SK-N-SH (cell line): ENCODE measurements at regions of chr19 and their contacts with region 1.

Region 1: DNA sequence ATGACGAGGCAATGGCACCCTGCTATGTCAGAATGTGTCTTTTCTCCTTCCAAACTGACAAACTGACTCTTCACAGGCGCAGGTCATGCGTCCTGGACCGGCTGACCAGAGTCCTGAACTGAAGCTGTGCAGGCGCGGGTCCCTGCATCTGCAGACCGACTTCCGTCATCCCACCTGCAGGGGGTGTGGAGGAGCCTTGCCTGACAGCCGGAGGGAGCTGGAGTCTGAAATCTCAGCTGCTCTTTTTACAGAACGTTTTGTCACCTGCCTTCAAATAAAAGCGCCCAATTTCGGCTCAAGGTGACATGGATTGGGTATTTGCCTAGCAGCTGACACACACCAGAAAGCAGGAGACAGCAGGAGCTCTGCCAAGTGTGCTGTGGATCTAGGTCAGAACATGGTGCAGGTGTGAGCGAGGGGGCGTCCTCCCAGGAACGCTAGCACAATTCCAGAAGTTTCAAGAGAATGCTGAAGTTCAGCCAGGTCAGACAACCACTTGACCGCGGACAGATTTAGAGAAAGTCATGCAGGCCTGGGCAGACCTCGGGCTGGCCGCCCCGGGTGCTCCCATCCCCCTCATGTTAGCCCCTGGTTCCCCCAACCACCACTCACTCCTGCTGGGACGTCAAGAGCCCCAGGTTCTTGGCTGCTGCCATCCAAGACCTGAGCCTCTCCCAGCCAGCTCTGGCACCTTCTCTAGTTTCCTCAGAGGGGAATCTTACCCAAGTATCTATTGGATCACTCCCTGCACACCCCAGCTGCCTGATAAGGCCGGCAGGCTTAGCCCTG is 32.8 kb downstream of the ELL start:
- DNase-seq: peak; percentile 78
- H3K4me3 ChIP-seq: no peak overlapping the region
- H3K27ac ChIP-seq: no peak overlapping the region
- H3K4me1 ChIP-seq: peaks cover 14 to 51% of the 10 kb centered on the region in 2 experiments; a peak in 2 of 4 replicates
- H3K27me3 ChIP-seq: no peaks in the 10 kb centered on the region
- CTCF ChIP-seq: peak; percentile 26
- EP300 ChIP-seq: no peak
- RAD21 ChIP-seq: peak; percentile 65

Region 2: DNA sequence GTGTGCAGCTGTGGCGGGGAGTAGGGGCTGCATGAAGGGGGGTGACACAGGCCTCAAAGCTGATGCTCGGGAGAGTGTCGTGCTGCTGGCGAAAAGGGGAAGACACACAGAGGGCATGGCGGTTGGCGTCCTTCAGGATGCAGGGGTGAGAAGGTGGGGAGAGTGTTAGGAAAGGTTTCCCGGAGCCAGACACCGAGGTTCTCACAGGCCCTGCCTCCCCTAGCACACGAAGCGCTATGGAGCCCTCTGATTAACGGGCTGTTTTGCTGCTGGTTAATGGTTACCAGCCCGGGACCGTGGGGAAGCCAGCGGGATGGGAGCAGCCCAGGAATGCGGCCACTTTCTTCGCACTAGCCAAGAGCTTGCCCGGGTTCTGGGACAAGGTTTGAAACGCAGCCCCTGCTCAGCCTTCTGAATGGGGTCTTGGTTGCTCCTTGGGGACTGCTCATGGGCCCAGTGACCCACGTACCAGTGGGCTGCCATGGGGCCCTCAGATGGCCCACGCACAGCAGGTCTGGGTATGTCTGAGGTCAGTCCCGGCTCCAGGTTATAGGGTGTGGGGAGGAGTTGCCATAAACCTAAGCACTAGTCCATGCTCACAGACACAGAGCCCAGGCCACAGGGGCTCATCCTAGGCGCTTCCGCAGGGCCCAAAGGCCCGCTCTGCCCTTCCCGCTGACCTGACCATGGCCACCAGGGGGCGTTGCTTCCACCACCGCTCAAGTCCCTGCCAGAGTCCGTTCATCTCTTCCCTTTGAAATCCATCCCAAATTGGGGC is 19.8 kb before region 1 on chr19:
- CTCF ChIA-PET with region 1: interaction called, 21 read pairs
- POLR2A ChIA-PET with region 1: no interaction called
- DNase-seq: peak; percentile 82
- H3K4me3 ChIP-seq: no peak overlapping the region; a peak in 1 of 4 replicates
- H3K27ac ChIP-seq: no peak overlapping the region
- H3K4me1 ChIP-seq: peaks cover 0 to 5% of the 10 kb centered on the region in 2 experiments; a peak in 1 of 4 replicates
- H3K27me3 ChIP-seq: no peaks in the 10 kb centered on the region
- CTCF ChIP-seq: peak; percentile 84
- EP300 ChIP-seq: no peak
- RAD21 ChIP-seq: peak; percentile 59

Region 3: GRCh38 chr19:18503971-18504885 is 15.2 kb after region 1 on chr19:
- CTCF ChIA-PET with region 1: interaction called, 20 read pairs
- POLR2A ChIA-PET with region 1: interaction called, 3 read pairs
- DNase-seq: no peak
- H3K4me3 ChIP-seq: no peak overlapping the region
- H3K27ac ChIP-seq: no peak overlapping the region; a peak in 1 of 4 replicates
- H3K4me1 ChIP-seq: peaks cover 0 to 75% of the 10 kb centered on the region in 2 experiments; a peak in 1 of 4 replicates
- H3K27me3 ChIP-seq: no peaks in the 10 kb centered on the region
- CTCF ChIP-seq: no peak
- EP300 ChIP-seq: no peak
- RAD21 ChIP-seq: no peak

Region 4: DNA sequence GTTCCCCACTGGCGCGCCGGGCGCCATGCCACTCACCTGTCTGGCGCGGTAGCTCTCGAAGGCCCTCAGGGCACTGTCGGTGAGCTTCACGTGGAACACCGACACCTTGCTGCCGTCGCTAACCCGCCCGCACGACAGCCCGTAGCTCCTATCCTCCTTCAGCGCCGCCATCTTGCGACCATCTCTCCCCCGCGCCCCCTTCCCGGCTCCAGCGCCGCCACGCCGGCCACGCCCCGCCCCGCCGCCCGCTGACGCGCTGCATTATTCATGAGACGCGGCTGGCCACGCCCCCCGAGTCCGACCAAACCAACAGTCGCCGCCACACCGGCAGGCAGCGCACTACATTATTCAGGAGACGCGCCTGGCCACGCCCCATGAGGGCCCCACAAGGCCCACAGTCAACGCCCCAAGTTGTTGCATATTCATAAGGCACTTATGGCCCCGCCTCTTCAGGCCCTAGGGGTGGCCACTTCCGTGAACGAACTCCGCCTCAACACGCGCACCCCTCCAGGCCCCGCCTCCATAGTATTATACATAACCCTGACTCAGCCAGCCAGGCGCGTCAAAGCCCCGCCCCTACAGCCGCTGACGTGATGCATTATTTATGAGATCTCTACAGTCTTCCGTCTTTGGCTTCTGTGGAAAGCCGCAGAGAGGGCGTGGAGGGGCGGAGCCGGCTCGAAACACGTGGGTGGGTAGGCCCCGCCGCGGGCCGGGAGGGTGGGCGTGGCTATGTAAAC is 33.0 kb after region 1 on chr19 and contains the start of gene ELL:
- CTCF ChIA-PET with region 1: interaction called, 29 read pairs
- POLR2A ChIA-PET with region 1: no interaction called
- DNase-seq: peak; percentile 96
- H3K4me3 ChIP-seq: peak within 1 kb of the TSS; percentile 73 to 97
- H3K27ac ChIP-seq: peak within 1 kb of the TSS; percentile 72 to 95
- H3K4me1 ChIP-seq: peaks cover 4 to 11% of the 10 kb centered on the region in 2 experiments; a peak in 1 of 4 replicates
- H3K27me3 ChIP-seq: no peaks in the 10 kb centered on the region
- CTCF ChIP-seq: no peak
- EP300 ChIP-seq: no peak
- RAD21 ChIP-seq: no peak
- polyA plus RNA-seq, gene ELL: 3.6 and 7.4 TPM in 2 replicates

Region 5: DNA sequence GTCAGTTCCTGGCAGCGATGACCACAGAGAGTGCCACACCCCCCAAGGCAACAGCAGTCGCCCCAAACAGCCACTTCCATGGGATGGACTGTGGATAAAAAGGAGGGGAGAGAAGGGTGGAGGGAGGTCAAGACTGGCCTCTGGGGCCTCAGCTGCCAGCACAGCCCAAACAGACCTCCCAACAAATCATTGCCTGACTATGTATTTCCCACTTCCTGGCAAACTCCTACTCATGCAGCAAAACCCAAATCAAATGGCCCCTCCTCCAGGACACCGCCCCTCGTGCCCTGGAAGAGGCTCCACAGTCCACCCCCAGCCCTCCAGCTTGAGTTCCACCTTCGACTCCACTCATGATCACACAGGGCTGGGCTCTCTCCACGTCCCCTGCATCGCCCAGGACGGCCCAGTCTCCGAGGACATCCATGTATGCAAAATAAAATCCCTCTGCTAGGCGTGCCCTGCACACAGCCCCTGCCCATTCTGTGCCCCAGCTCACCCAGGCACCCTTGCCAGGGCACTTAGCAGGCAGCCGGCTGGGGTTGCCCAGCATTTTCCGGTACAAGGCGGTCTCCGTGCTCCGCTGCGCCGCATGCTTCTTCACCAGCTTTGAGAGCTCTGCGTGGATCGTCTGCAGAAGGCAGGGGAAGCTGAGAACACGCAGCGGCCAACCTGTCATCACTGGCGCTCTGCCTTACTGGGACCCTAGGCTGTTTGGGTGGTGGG is 43.3 kb after region 1 on chr19:
- CTCF ChIA-PET with region 1: no interaction called
- POLR2A ChIA-PET with region 1: no interaction called
- DNase-seq: peak; percentile 14
- H3K4me3 ChIP-seq: no peak overlapping the region
- H3K27ac ChIP-seq: no peak overlapping the region
- H3K4me1 ChIP-seq: no peaks in the 10 kb centered on the region
- H3K27me3 ChIP-seq: no peaks in the 10 kb centered on the region
- CTCF ChIP-seq: no peak
- EP300 ChIP-seq: no peak
- RAD21 ChIP-seq: no peak

Region 6: GRCh38 chr19:18571564-18572300 is 82.7 kb after region 1 on chr19 and contains the start of gene UBA52:
- CTCF ChIA-PET with region 1: interaction called, 6 read pairs
- POLR2A ChIA-PET with region 1: interaction called, 10 read pairs
- DNase-seq: peak; percentile 96
- H3K4me3 ChIP-seq: peak within 1 kb of the TSS; percentile 64 to 86
- H3K27ac ChIP-seq: peak within 1 kb of the TSS; percentile 74 to 76
- H3K4me1 ChIP-seq: peaks cover 10 to 16% of the 10 kb centered on the region in 2 experiments; a peak in 3 of 4 replicates
- H3K27me3 ChIP-seq: no peaks in the 10 kb centered on the region
- CTCF ChIP-seq: no peak
- EP300 ChIP-seq: no peak; a peak in 1 of 4 replicates
- RAD21 ChIP-seq: no peak
- polyA plus RNA-seq, gene UBA52: 2,690 and 3,026 TPM in 2 replicates